HepG2 (cell line): ENCODE measurements at regions of chr2 and their contacts with region 1.

Region 1: DNA sequence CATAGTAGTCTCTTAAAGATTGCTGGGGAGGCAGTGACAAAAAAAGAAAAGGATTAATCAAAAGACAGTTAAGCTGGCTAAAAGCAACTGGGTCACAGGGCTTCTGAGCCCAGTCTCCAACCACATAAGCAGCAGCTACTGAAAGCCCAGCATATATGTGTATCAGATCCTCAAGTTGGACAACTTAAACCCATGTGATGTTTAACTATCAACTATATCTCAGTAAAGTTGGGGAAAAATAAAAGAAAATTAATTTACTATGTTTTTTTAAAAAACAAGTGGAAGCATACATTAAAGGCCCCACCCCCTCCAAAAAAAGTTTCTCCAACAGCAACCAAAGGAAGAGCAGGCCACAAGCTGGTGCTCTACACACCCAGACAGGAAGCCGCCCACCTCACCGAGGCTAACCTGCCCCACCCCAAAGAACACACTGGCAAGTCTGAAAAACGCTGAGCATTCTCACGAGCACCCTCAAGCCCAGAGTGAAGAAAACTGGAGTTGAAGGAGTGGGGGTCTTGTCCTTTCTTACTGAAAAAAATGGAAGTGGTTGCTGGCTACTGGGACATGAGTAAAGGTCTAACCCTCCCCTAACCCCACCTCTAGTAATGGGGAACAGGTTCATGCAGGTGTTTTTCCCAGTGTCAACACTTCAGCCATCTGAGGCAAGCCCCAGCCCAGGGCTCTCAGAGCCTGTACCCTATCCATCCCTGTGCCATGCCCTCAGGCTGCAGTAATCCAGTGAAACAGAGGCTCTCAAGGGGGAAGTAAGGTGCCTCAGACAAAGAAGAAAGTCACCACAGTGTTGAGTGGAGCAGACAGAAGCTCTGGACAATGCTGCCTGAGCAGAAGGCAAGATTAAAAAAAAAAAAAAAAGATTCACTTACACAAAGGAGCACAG is 106.3 kb downstream of the GYPC start:
- DNase-seq: no peak
- ATAC-seq: no peak
- H3K4me3 ChIP-seq: no peak overlapping the region
- H3K27ac ChIP-seq: no peak overlapping the region
- H3K4me1 ChIP-seq: no peaks in the 10 kb centered on the region
- H3K27me3 ChIP-seq: peaks cover 0 to 14% of the 10 kb centered on the region in 2 experiments; a peak in 2 of 5 replicates
- CTCF ChIP-seq: no peak
- EP300 ChIP-seq: no peak
- POLR2A ChIP-seq: no peak
- RAD21 ChIP-seq: no peak

Region 2: DNA sequence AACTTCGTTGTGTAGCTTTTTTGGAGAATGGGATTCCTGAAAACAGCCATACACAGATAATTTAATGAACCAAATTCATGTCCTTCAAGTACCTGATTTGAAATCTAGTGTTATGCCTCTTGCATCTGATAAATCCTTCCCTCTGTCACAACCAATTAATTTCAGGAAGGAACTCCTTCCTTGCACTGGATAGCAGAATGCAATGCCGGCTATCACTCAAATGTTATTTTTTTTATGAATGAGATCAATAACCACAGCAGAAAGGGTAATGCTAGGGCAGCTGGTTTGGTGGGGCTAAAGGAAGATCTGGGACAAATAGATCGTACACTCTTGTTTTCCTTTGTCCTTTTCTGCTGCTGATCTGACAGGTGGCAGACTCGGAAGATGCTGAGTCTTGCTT is 1005.8 kb before region 1 on chr2:
- CTCF ChIA-PET with region 1: no interaction called
- POLR2A ChIA-PET with region 1: no interaction called
- in situ Hi-C with region 1: loop called (anchors 25 kb)
- intact Hi-C with region 1: no loop called
- DNase-seq: no peak
- ATAC-seq: no peak
- H3K4me3 ChIP-seq: no peak overlapping the region
- H3K27ac ChIP-seq: no peak overlapping the region
- H3K4me1 ChIP-seq: no peaks in the 10 kb centered on the region
- H3K27me3 ChIP-seq: no peaks in the 10 kb centered on the region
- CTCF ChIP-seq: no peak
- EP300 ChIP-seq: no peak
- POLR2A ChIP-seq: no peak
- RAD21 ChIP-seq: no peak

Region 3: DNA sequence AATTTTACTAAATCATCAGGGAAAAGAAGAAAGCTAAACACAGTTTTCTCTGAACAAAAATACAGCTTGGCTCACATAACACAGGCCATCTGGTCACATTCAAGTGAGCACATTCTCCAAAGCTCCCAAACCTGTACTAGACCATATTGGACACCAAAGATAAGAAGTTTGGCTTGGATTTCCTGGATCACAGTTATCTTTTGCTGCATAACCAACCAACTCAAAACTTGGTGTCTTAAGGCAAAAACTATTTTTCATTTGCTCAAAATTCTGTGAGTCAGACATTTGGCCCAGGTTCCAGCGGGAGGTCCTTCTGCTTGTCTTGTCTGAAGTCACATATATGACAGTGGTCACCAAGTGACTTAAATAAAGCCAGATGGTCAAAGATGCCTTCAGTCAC is 23.1 kb before region 1 on chr2:
- CTCF ChIA-PET with region 1: no interaction called
- POLR2A ChIA-PET with region 1: no interaction called
- in situ Hi-C with region 1: no loop called
- intact Hi-C with region 1: no loop called
- DNase-seq: no peak
- ATAC-seq: no peak
- H3K4me3 ChIP-seq: no peak overlapping the region
- H3K27ac ChIP-seq: no peak overlapping the region
- H3K4me1 ChIP-seq: no peaks in the 10 kb centered on the region
- H3K27me3 ChIP-seq: no peaks in the 10 kb centered on the region
- CTCF ChIP-seq: no peak
- EP300 ChIP-seq: no peak
- POLR2A ChIP-seq: no peak
- RAD21 ChIP-seq: no peak

Region 4: GRCh38 chr2:127064642-127065250 is 302.5 kb after region 1 on chr2:
- CTCF ChIA-PET with region 1: no interaction called
- POLR2A ChIA-PET with region 1: no interaction called
- in situ Hi-C with region 1: no loop called
- intact Hi-C with region 1: no loop called
- DNase-seq: peak; percentile 83
- ATAC-seq: peak; percentile 86
- H3K4me3 ChIP-seq: peak overlapping the region in 1 of 3 experiments; percentile 56; a peak in 1 of 6 replicates
- H3K27ac ChIP-seq: no peak overlapping the region
- H3K4me1 ChIP-seq: peaks cover 22% of the 10 kb centered on the region
- H3K27me3 ChIP-seq: no peaks in the 10 kb centered on the region; a peak in 1 of 5 replicates
- CTCF ChIP-seq: peak; percentile 41; the same call in 1 of the 2 replicates
- EP300 ChIP-seq: peak in 1 of 2 experiments; percentile 62; a peak in 1 of 4 replicates
- POLR2A ChIP-seq: peak in 1 of 2 experiments; percentile 49; a peak in 2 of 4 replicates
- RAD21 ChIP-seq: no peak